OCI-LY7 (cell line): ENCODE measurements at regions of chr2 and their contacts with region 1.

Region 1: GRCh38 chr2:68441179-68441993 is 25.7 kb downstream of the FBXO48 start:
- DNase-seq: peak; percentile 99
- H3K4me3 ChIP-seq: peak overlapping the region; percentile 40
- H3K27ac ChIP-seq: peak overlapping the region; percentile 74
- H3K4me1 ChIP-seq: peaks cover 50% of the 10 kb centered on the region
- CTCF ChIP-seq: peak; percentile 98

Region 2: DNA sequence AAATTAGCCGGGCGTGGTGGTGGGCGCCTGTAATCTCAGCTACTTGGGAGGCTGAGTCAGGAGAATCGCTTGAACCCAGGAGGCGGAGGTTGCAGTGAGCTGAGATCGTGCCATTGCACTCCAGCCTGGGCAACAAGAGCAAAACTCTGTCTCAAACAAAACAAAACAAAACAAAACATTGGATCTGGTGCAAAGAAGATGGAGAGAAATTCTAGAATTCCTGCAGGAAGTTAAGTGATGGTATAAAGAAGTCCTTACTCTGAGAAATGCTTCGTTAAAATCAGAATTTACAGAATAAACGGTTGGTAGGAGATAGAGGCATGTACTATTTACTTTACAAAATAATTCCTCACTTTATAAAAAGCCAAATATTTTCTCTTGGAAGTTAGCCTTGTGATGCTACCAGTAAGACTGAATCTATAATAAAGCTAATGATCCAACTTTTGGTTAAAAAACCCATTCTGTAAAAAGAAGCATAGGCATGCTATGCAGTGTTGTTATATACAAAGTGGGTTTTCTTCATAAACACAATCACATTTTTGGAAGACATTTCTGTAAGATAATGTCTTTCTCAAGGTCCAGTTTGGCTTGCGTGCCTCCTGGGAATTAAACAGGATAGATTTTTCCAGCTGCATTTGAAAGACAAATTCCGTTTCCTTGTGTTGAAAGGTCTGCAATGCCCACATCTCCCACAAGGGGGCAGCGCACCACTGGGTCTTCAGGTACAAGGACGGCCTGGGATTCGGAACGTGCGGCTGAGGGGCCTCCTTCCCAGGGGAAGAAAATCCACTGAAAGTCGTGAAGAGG is 319.3 kb before region 1 on chr2:
- CTCF ChIA-PET with region 1: no interaction called
- POLR2A ChIA-PET with region 1: no interaction called
- intact Hi-C with region 1: loop called (anchors 1 kb)
- DNase-seq: peak; percentile 78
- H3K4me3 ChIP-seq: peak overlapping the region; percentile 47
- H3K27ac ChIP-seq: peak overlapping the region; percentile 96
- H3K4me1 ChIP-seq: peaks cover 48% of the 10 kb centered on the region
- CTCF ChIP-seq: peak; percentile 100

Region 3: GRCh38 chr2:68196120-68196716 is 245.2 kb before region 1 on chr2:
- CTCF ChIA-PET with region 1: no interaction called
- POLR2A ChIA-PET with region 1: no interaction called
- intact Hi-C with region 1: loop called (anchors 5 kb)
- DNase-seq: peak; percentile 66
- H3K4me3 ChIP-seq: no peak overlapping the region
- H3K27ac ChIP-seq: no peak overlapping the region
- H3K4me1 ChIP-seq: peaks cover 30% of the 10 kb centered on the region
- CTCF ChIP-seq: peak; percentile 89

Region 4: DNA sequence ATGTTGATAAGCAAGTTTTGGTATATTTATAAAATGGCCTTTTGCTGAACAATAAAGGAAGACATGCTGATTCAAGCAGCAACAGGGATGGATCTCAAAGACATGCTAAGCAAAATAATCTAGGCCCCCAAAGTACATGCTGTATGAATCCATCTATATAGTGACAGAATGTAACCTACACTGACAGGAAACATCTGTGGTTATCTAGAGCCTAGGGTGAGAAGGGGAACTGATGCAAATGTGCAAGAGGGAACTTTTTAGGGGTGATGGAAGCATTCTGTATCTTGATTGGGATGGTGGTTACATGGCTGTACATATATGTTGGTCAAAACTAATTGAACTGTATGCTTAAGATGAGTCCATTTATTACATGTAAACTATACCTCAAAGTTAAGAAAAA is 145.9 kb before region 1 on chr2:
- CTCF ChIA-PET with region 1: interaction called, 3 read pairs
- POLR2A ChIA-PET with region 1: no interaction called
- intact Hi-C with region 1: loop called (anchors 1 kb)
- DNase-seq: peak; percentile 56
- H3K4me3 ChIP-seq: no peak overlapping the region
- H3K27ac ChIP-seq: no peak overlapping the region
- H3K4me1 ChIP-seq: peaks cover 24% of the 10 kb centered on the region
- CTCF ChIP-seq: no peak

Region 5: GRCh38 chr2:68385220-68385906 is 56.0 kb before region 1 on chr2:
- CTCF ChIA-PET with region 1: interaction called, 3 read pairs
- POLR2A ChIA-PET with region 1: interaction called, 5 read pairs
- intact Hi-C with region 1: loop called (anchors 1 kb)
- DNase-seq: peak; percentile 89
- H3K4me3 ChIP-seq: peak overlapping the region; percentile 35
- H3K27ac ChIP-seq: peak overlapping the region; percentile 87
- H3K4me1 ChIP-seq: peaks cover 71% of the 10 kb centered on the region
- CTCF ChIP-seq: peak; percentile 47

Region 6: DNA sequence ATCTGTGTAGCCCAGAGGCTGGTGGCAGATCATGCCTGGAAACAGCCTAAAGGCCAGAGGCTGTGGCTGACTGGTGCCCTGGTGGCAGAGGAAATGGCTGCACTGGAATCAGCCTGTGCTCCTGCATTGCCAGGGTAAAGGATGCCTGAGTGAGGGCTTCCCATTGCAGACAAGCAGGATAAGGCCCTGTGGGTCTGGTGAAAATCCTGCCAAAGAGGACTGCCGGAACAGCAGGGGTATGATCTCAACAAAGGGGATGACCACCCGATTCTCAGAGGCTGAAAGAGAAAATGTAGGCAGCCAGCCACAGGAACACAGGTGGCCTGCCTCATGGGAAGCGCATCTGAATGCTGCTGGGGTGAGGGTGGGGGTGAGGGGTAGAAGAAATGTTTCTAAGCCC is 22.5 kb before region 1 on chr2:
- CTCF ChIA-PET with region 1: interaction called, 5 read pairs
- POLR2A ChIA-PET with region 1: interaction called, 21 read pairs
- intact Hi-C with region 1: no loop called
- DNase-seq: peak; percentile 71
- H3K4me3 ChIP-seq: peak overlapping the region; percentile 1
- H3K27ac ChIP-seq: peak overlapping the region; percentile 38
- H3K4me1 ChIP-seq: peaks cover 67% of the 10 kb centered on the region
- CTCF ChIP-seq: peak; percentile 49